Breast epithelium (tissue), 4 donors: ENCODE measurements at regions of chr10 and their contacts with region 1.

Region 1: GRCh38 chr10:129896136-129896859 is 67.8 kb downstream of the EBF3 start:
- DNase-seq: no peak
- H3K4me3 ChIP-seq: no peak overlapping the region
- H3K27ac ChIP-seq: no peak overlapping the region
- H3K4me1 ChIP-seq: no peaks in the 10 kb centered on the region
- H3K27me3 ChIP-seq: peaks cover 0 to 23% of the 10 kb centered on the region in 2 donors
- CTCF ChIP-seq: no peak
- POLR2A ChIP-seq: no peak

Region 2: GRCh38 chr10:127977357-127978009 is 1918.8 kb before region 1 on chr10:
- intact Hi-C with region 1: loop called (anchors 5 kb)
- DNase-seq: no peak
- H3K4me3 ChIP-seq: peak overlapping the region in 2 of 3 donors; percentile 29 to 51
- H3K27ac ChIP-seq: peak overlapping the region; percentile 65 to 78
- H3K4me1 ChIP-seq: no peaks in the 10 kb centered on the region
- H3K27me3 ChIP-seq: no peaks in the 10 kb centered on the region
- CTCF ChIP-seq: no peak
- POLR2A ChIP-seq: no peak

Region 3: DNA sequence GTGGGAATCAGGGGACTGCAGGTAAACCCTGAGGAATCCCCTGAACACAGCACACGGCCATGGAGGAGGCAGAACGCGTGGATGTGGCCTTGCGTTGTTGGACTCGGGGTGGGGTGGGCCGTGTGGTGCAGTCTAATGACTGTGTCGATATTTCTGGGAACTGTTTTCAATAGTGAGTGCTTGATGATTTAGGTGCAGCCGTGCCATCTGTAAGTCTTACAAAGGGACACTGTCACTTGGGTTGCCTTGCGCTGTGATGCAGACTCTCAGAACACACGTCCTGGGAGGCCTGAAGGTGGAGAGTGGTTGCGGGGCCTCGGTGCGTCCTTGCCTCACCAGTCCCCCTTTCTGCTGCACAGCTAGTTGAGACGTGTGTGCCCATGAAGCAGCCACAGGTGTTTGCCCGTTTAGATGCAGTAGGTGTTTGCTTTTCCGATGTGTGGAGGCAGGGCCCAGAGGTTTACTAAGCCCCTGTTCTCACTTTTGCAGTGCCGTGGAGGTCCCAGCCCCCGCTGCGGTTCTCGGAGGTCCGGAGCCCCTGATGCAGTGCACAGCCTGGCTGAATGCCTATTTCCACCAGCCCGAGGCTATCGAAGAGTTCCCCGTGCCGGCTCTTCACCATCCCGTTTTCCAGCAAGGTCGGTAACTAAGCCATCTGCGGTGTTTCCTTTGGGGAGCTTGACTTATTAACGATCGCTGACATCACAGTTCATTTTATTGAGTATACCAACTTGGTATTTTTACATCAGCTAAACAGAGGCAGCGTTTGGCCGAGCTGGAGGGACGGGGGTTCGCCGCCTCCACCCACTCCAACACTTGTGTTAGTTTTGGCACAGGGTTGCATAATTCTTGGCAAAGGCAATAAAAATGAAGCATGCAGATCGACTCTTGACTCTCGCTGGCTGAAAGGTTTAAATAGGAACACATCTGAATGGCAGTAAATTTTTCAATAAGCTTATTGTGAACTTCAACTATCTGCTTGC is 188.6 kb before region 1 on chr10:
- intact Hi-C with region 1: no loop called
- DNase-seq: no peak
- H3K4me3 ChIP-seq: peak overlapping the region in 2 of 3 donors; percentile 24 to 52
- H3K27ac ChIP-seq: no peak overlapping the region
- H3K4me1 ChIP-seq: peaks cover 0 to 8% of the 10 kb centered on the region in 2 donors
- H3K27me3 ChIP-seq: no peaks in the 10 kb centered on the region
- CTCF ChIP-seq: no peak
- POLR2A ChIP-seq: no peak